H1 (cell line): ENCODE measurements at regions of chr4 and their contacts with region 1.

Region 1: GRCh38 chr4:3436798-3437581 is 4.8 kb upstream of the HGFAC start:
- DNase-seq: no peak
- H3K4me3 ChIP-seq: no peak overlapping the region
- H3K27ac ChIP-seq: no peak overlapping the region
- H3K4me1 ChIP-seq: peaks cover 0 to 5% (median 2%) of the 10 kb centered on the region in 4 experiments; a peak in 3 of 7 replicates
- H3K27me3 ChIP-seq: no peaks in the 10 kb centered on the region; a peak in 1 of 7 replicates
- CTCF ChIP-seq: no peak
- EP300 ChIP-seq: no peak
- POLR2A ChIP-seq: no peak
- RAD21 ChIP-seq: no peak

Region 2: DNA sequence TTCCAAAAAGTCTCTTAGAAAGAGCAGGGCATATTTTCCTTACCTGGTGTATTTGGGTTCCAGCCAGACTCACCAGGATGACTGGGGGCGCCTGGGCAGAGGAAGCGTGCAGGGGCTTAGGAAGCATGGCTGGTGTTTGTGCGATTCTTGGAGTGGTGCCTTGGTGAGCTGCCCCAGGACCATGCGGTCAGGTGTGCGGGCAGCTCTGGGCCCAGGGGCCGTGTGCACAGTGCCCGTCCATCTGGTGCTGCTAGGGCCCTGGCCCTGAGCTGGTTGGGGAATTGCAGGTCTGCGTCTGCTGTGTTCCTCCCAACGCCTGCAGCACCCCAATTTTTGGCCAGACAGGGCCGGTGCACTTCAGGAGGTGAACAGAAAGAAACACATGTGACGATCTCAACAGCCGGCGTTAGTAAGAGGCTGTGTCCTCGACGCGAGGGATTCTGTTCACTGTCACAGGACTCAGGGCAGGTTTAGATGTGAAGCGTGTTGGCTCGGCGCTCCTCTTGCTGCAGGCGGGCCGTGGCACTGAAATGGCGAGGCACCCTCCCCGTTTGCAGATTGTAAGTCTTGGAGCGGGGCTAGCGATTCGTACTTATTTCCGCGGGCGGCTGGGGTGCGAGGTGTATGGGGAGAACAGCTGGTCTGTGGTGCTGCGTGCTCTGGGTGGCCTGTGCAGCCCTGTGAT is 129.0 kb before region 1 on chr4:
- CTCF ChIA-PET with region 1: no interaction called
- POLR2A ChIA-PET with region 1: no interaction called
- DNase-seq: no peak
- H3K4me3 ChIP-seq: no peak overlapping the region
- H3K27ac ChIP-seq: no peak overlapping the region
- H3K4me1 ChIP-seq: peaks cover 0 to 18% (median 6%) of the 10 kb centered on the region in 4 experiments; a peak in 4 of 7 replicates
- H3K27me3 ChIP-seq: no peaks in the 10 kb centered on the region
- CTCF ChIP-seq: no peak
- EP300 ChIP-seq: no peak
- POLR2A ChIP-seq: no peak
- RAD21 ChIP-seq: no peak

Region 3: GRCh38 chr4:3369781-3370674 is 67.0 kb before region 1 on chr4:
- CTCF ChIA-PET with region 1: interaction called, 10 read pairs
- POLR2A ChIA-PET with region 1: no interaction called
- DNase-seq: peak in 1 of 2 experiments; percentile 54
- H3K4me3 ChIP-seq: peak overlapping the region in 3 of 4 experiments; percentile 8 to 47 (median 14); a peak in 5 of 8 replicates
- H3K27ac ChIP-seq: no peak overlapping the region
- H3K4me1 ChIP-seq: peaks cover 7 to 33% (median 21%) of the 10 kb centered on the region in 4 experiments
- H3K27me3 ChIP-seq: peaks cover 0 to 13% (median 10%) of the 10 kb centered on the region in 4 experiments; a peak in 3 of 7 replicates
- CTCF ChIP-seq: no peak
- EP300 ChIP-seq: no peak
- POLR2A ChIP-seq: no peak
- RAD21 ChIP-seq: no peak

Region 4: DNA sequence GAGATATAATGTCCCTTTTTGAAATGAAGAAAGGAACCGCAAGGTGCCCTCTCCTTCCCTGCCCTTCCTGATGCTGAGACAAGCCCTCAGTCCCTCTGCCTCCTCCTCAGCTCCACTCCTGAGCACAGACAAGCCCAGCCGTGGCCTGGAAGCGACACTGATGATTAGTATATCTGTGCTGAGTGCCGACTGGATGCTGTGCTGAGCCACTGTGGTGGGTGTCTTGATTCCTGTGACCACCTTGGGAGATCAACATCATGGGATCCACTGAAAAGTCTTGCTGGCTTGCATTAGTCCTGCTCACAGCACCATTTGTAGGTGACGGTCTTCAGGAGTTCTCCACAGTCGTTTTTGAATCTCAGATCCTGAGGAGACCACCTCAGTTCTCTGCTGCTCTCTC is 54.7 kb before region 1 on chr4:
- CTCF ChIA-PET with region 1: no interaction called
- POLR2A ChIA-PET with region 1: no interaction called
- DNase-seq: no peak
- H3K4me3 ChIP-seq: no peak overlapping the region
- H3K27ac ChIP-seq: no peak overlapping the region
- H3K4me1 ChIP-seq: peaks cover 0 to 9% (median 4%) of the 10 kb centered on the region in 4 experiments; a peak in 3 of 7 replicates
- H3K27me3 ChIP-seq: no peaks in the 10 kb centered on the region; a peak in 1 of 7 replicates
- CTCF ChIP-seq: no peak
- EP300 ChIP-seq: no peak
- POLR2A ChIP-seq: no peak
- RAD21 ChIP-seq: no peak

Region 5: DNA sequence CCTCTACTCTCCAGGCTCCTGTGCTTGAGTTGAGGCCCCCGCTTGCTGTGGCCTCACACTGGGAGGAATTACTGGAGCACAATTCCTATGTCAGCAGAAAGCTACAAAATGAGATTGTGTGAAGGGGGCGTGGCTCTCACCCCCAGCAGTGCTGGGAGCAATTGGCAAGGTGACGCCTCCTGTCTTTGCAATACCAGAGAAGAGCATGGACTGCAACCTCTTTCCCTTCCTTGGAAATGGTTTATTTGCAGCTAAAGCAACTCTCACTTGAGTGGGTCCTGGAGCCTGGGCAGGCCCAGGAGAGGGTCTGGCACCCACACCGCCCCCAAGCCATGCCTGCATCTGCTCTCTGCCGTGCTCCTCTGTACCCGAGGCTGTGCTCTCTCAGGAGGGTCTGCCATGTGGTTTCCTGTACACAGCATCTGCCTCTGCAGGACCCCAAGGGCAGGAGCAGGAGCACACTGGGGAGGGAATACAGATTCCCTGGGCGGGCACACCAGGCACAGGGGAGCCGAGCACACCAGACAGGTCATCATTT is 28.1 kb before region 1 on chr4:
- CTCF ChIA-PET with region 1: interaction called, 11 read pairs
- POLR2A ChIA-PET with region 1: no interaction called
- DNase-seq: no peak
- H3K4me3 ChIP-seq: no peak overlapping the region
- H3K27ac ChIP-seq: no peak overlapping the region
- H3K4me1 ChIP-seq: no peaks in the 10 kb centered on the region; a peak in 3 of 7 replicates
- H3K27me3 ChIP-seq: no peaks in the 10 kb centered on the region
- CTCF ChIP-seq: no peak
- EP300 ChIP-seq: no peak
- POLR2A ChIP-seq: no peak
- RAD21 ChIP-seq: no peak

Region 6: DNA sequence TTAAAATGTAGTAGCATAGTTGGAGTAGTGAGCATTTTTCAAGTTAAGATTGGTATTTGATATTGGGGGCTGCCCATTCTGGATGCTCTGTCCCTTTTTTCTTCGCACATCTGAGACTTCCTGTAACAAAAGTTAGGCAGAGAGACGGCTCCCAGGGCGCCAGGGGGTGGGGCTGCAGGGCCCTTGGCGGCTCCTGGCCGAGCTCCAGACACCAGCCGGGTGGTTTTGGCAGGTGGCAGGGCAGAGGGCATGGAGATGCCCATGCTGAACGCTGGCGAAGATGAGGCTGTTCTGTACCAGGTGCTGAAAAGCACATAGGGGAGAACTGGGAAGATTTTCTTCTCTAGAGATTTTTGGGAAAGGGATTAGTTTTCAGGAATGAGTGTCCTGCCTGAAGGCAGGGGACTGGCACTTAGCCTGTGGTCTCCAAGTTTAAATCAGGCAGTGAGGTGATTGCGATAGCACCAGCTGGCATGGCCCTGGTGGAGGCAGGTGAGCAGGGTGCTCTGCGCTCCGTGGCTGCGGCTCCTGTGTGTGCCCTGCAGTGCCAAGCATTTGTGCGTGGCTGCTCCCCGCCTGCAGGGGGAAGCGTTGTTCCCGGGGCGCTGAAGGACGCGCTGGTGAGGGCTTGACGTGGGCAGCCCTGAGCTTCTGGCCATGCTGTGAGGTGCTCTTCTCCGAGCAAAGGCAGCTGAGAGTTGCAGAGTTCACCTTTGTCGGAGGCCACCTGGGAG is 18.8 kb before region 1 on chr4:
- CTCF ChIA-PET with region 1: interaction called, 32 read pairs
- POLR2A ChIA-PET with region 1: interaction called, 5 read pairs
- DNase-seq: no peak
- H3K4me3 ChIP-seq: no peak overlapping the region
- H3K27ac ChIP-seq: no peak overlapping the region
- H3K4me1 ChIP-seq: no peaks in the 10 kb centered on the region; a peak in 3 of 7 replicates
- H3K27me3 ChIP-seq: no peaks in the 10 kb centered on the region
- CTCF ChIP-seq: peak in 2 of 3 experiments; percentile 45 to 74; a peak in 3 of 4 replicates
- EP300 ChIP-seq: no peak
- POLR2A ChIP-seq: no peak
- RAD21 ChIP-seq: peak; percentile 32 to 43; a peak in 3 of 4 replicates

Region 7: DNA sequence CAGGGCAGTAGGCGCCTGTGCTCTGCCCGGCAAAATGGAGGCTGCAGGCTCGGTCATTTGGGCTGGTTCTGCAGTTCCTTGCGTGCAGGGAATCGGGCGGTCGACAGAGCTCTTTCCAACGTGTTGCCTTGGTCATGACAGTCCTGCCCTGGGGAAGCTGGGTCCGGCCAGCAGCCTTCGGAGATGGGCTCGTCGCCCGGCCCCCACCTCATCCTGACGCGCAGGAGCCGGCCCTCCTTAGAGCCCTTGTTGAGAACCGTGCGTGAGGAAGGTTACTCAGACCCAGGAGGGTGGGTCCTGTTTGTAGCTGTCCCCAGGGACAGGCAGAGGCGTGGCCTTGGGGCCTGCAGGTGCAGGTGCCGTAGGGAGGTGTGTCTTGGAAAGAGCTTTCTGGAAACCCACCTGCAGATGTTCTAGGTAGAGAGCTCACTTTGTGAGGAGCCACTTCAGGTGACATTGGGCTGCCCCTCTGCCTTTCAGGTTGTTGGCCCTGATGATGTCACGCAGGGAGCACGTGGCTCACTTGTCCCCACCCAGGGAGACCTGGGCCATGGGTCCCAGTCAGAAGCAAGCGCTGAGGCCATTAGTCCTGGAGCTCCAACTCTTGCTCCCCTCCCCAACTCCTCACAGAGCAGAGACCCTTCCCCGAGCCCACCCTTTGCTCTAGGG is 10.4 kb before region 1 on chr4:
- CTCF ChIA-PET with region 1: interaction called, 32 read pairs
- POLR2A ChIA-PET with region 1: interaction called, 5 read pairs
- DNase-seq: no peak
- H3K4me3 ChIP-seq: no peak overlapping the region
- H3K27ac ChIP-seq: no peak overlapping the region
- H3K4me1 ChIP-seq: no peaks in the 10 kb centered on the region; a peak in 1 of 7 replicates
- H3K27me3 ChIP-seq: no peaks in the 10 kb centered on the region; a peak in 1 of 7 replicates
- CTCF ChIP-seq: no peak
- EP300 ChIP-seq: no peak
- POLR2A ChIP-seq: no peak
- RAD21 ChIP-seq: no peak